Prostate gland (tissue), 2 donors: ENCODE measurements at regions of chr14 and their contacts with region 1.

Region 1: DNA sequence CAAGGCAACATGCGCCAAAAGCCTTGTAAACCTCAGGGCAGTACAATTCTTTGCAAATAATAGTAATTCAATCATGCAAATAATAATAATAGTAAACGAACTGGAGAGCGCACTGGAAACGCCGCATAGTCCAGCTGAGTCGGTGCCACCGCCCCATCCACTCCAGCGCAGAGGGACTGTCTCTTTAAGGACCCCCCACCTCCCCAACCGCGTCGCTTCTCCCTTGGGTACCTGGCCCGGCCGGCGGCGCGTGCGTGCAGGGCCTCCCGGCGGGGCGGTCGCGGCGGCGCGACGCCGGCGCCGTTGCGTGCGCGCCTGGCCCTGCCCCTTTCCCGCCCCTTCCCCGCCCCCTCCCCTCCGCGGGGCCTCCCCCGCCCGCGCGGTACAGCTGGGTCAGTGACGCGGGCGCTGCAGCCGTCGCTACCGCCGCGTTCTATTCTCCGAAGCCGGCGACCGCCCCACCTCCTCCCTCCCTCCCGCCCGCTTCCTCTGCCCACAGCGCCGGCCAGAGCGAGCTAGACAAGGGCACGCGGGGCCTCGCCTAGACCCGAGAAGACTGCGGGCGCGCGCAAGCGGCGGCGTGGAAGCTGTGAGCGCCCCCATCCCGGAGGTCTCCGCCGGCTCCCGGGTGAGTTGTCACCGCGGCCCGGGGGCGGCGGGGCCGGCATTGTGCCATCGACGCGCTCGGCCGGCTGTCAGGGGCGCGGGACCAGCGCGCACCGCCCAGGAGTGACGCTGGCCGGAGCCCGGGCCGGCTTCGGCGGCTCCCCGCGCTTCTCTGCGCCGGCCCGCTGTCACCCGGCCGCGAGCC is at the start of gene SUSD6:
- DNase-seq: peak; percentile 91
- H3K4me3 ChIP-seq: peak within 1 kb of the TSS; percentile 83 to 90
- H3K27ac ChIP-seq: peak within 1 kb of the TSS; percentile 94 to 95
- H3K4me1 ChIP-seq: peaks cover 7% of the 10 kb centered on the region
- H3K27me3 ChIP-seq: no peaks in the 10 kb centered on the region
- CTCF ChIP-seq: no peak
- POLR2A ChIP-seq: peak; percentile 75
- total RNA-seq, gene SUSD6: 41.1 to 52.3 TPM

Region 2: GRCh38 chr14:69460093-69460701 is 151.2 kb before region 1 on chr14:
- intact Hi-C with region 1: no loop called
- DNase-seq: peak; percentile 72
- H3K4me3 ChIP-seq: no peak overlapping the region
- H3K27ac ChIP-seq: no peak overlapping the region
- H3K4me1 ChIP-seq: no peaks in the 10 kb centered on the region
- H3K27me3 ChIP-seq: no peaks in the 10 kb centered on the region
- CTCF ChIP-seq: peak; percentile 35 to 91 (median 79)
- POLR2A ChIP-seq: no peak

Region 3: GRCh38 chr14:69532566-69533340 is 78.7 kb before region 1 on chr14:
- intact Hi-C with region 1: no loop called
- DNase-seq: no peak
- H3K4me3 ChIP-seq: no peak overlapping the region
- H3K27ac ChIP-seq: no peak overlapping the region
- H3K4me1 ChIP-seq: no peaks in the 10 kb centered on the region
- H3K27me3 ChIP-seq: no peaks in the 10 kb centered on the region
- CTCF ChIP-seq: no peak
- POLR2A ChIP-seq: no peak

Region 4: GRCh38 chr14:69652942-69653684 is 41.7 kb after region 1 on chr14:
- intact Hi-C with region 1: loop called (anchors 5 kb)
- DNase-seq: no peak
- H3K4me3 ChIP-seq: no peak overlapping the region
- H3K27ac ChIP-seq: peak overlapping the region in 1 of 2 donors; percentile 33
- H3K4me1 ChIP-seq: peaks cover 21% of the 10 kb centered on the region
- H3K27me3 ChIP-seq: no peaks in the 10 kb centered on the region
- CTCF ChIP-seq: no peak
- POLR2A ChIP-seq: no peak

Region 5: DNA sequence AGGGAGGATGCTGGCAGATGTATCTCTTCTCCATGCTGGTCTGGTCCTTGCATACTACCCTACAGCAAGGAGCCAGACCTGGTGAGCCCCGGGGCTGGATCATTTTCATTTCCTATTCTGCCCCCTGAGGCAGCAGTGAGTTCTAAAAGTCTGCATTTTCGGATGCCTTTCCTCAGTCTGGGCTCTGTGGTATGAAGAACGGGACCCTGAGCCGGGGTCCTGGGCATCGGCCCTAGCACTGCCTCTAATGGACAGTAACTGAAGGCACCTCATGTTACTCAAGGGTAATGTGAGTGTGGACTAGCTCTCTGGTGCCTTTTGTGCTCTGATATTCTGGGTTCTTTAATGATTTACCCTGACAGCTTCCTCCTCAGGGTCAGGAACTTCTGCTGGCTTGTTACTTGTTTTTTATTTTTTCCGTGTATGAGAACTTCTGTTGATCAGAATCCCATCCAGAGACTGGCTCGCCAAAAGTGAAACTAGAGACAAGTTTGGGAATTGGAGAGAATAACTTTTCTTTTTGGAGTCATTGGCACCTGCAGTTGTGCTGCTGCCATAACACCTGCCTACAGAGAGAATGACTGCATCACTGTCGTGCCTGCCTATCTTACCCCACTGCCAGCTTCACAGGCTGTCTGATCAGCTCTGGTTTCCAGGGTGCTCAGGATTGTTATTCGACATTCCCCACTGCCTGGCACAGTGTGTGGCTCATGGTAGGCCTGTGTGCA is 62.3 kb after region 1 on chr14:
- intact Hi-C with region 1: loop called (anchors 5 kb)
- DNase-seq: no peak
- H3K4me3 ChIP-seq: no peak overlapping the region
- H3K27ac ChIP-seq: peak overlapping the region; percentile 42 to 47
- H3K4me1 ChIP-seq: peaks cover 26% of the 10 kb centered on the region
- H3K27me3 ChIP-seq: no peaks in the 10 kb centered on the region
- CTCF ChIP-seq: no peak
- POLR2A ChIP-seq: no peak

Region 6: DNA sequence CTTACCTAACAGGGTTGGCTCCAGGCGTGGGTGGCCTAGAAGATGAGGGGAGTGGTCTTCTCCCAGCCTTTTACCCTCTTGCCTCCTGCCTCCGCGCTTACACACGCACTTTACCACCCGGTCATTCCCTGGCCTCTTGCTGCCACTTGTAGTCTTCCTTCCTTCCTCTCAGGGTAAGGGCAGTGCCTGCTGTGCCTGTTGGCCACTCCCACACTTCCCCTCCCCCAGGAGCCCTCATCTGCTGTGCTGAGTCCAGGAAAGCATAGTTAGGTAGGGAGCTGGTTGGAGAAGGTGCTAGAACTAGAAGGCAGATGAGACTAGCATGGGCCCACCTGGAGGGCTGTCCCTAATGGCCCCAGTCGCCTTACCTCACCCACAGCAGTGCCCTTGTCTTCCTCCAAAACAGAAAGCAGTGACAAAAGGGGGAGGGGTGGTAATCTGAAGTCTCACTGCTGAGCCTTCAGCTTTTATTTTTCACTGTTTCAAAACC is 101.2 kb after region 1 on chr14:
- intact Hi-C with region 1: loop called (anchors 5 kb)
- DNase-seq: peak; percentile 64
- H3K4me3 ChIP-seq: no peak overlapping the region
- H3K27ac ChIP-seq: peak overlapping the region; percentile 57 to 64
- H3K4me1 ChIP-seq: peaks cover 32% of the 10 kb centered on the region
- H3K27me3 ChIP-seq: no peaks in the 10 kb centered on the region
- CTCF ChIP-seq: no peak
- POLR2A ChIP-seq: no peak